Activated CD4-positive, alpha-beta T cell treated with anti-CD3 and anti-CD28 coated beads for 36 hours (primary cell): ENCODE measurements at regions of chr1 and their contacts with region 1.

Region 1: GRCh38 chr1:160726498-160727315 is 12.3 kb upstream of the SLAMF7 start:
- DNase-seq: peak; percentile 77
- ATAC-seq: peak; percentile 72
- H3K4me3 Mint-ChIP-seq: no peak overlapping the region
- H3K27ac Mint-ChIP-seq: no peak overlapping the region
- H3K4me1 Mint-ChIP-seq: peaks cover 28% of the 10 kb centered on the region
- H3K27me3 Mint-ChIP-seq: no peaks in the 10 kb centered on the region

Region 2: DNA sequence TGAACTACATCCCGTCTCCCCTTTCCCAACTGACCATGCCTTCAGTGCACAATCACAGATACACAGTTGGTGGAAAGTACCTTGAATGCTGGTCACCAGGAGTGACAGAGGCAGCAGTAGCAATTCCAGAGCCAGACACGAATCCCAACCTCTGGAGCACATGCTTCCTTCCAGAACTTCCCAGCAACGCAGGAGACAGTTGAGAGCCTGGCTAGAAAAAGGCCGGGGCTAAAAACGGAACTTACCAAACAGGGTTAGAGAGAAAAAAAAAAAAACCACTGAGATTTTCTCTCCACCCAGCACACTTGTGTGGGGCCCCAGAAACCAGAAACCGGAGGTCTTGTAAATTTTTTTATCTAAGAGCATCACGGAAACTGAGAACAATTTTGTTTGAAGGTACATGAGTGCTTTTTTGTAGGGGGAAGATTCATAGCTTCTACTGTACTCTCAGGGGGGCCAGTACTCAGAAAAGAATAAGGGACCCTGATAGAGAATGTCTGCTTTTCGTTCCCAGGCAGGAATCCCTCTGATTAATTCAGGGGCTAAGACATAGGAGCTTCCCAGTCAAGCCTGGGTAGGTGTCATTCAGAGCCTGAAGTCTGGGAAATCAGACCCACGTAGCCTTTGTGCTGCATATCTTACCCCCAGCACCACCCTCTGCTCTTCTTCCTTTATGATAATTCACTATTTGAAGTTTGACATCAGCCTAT is 14.9 kb before region 1 on chr1 and contains the start of gene CD48:
- CTCF ChIA-PET with region 1: interaction called, 103 read pairs
- POLR2A ChIA-PET with region 1: no interaction called
- intact Hi-C with region 1: loop called in 1 of 2 experiments (anchors 2 kb)
- DNase-seq: peak; percentile 70
- ATAC-seq: peak; percentile 40
- H3K4me3 Mint-ChIP-seq: no peak within 1 kb of the TSS
- H3K27ac Mint-ChIP-seq: no peak within 1 kb of the TSS
- H3K4me1 Mint-ChIP-seq: peaks cover 34% of the 10 kb centered on the region
- H3K27me3 Mint-ChIP-seq: no peaks in the 10 kb centered on the region
- total RNA-seq, gene CD48: 180 to 217 TPM

Region 3: GRCh38 chr1:160768295-160768657 is 41.6 kb after region 1 on chr1:
- CTCF ChIA-PET with region 1: interaction called, 176 read pairs
- POLR2A ChIA-PET with region 1: no interaction called
- intact Hi-C with region 1: loop called (anchors 1 kb)
- DNase-seq: peak; percentile 93
- ATAC-seq: peak; percentile 77
- H3K4me3 Mint-ChIP-seq: peak overlapping the region; percentile 75
- H3K27ac Mint-ChIP-seq: peak overlapping the region; percentile 99
- H3K4me1 Mint-ChIP-seq: peaks cover 44% of the 10 kb centered on the region
- H3K27me3 Mint-ChIP-seq: no peaks in the 10 kb centered on the region

Region 4: GRCh38 chr1:160837558-160838205 is 111.0 kb after region 1 on chr1:
- CTCF ChIA-PET with region 1: interaction called, 68 read pairs
- POLR2A ChIA-PET with region 1: interaction called, 3 read pairs
- intact Hi-C with region 1: no loop called
- DNase-seq: peak; percentile 87
- ATAC-seq: peak; percentile 93
- H3K4me3 Mint-ChIP-seq: peak overlapping the region; percentile 42
- H3K27ac Mint-ChIP-seq: peak overlapping the region; percentile 91
- H3K4me1 Mint-ChIP-seq: peaks cover 55% of the 10 kb centered on the region
- H3K27me3 Mint-ChIP-seq: no peaks in the 10 kb centered on the region

Region 5: DNA sequence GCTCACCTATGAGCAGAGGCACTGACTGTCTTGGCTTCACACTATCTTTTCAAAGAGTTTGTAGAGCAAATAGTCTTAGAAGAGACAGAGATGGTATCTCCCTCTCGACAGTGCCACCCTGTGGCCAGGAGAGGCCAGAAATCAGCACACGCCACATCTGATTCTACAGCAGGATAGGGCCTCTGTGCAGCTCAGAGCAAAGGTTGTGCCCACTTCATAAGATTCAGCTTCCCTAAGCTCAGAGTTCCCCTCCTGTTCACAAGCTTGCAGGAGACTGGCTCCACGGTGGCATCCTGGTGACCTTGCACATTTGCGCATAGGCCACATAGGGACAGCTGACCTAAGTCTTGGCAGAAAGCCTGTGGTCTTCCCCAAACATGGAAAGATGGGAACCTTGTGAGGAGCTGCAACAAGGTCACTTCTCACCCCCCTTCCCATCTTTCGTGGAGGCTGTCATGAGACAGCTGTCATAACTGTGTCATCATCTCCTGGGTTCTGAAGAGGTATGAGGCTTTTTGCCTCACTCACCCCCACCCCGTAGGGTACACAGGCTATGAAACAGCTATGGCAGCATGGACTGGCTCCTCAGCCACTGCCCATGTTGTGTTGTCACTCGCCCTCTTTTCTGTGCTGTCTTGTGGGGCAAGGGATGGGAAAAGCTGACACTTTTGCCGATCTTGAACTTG is 224.9 kb after region 1 on chr1:
- CTCF ChIA-PET with region 1: interaction called, 59 read pairs
- POLR2A ChIA-PET with region 1: no interaction called
- intact Hi-C with region 1: loop called (anchors 1 kb)
- DNase-seq: peak; percentile 85
- ATAC-seq: peak; percentile 89
- H3K4me3 Mint-ChIP-seq: no peak overlapping the region
- H3K27ac Mint-ChIP-seq: no peak overlapping the region
- H3K4me1 Mint-ChIP-seq: peaks cover 3% of the 10 kb centered on the region
- H3K27me3 Mint-ChIP-seq: no peaks in the 10 kb centered on the region